GM10248 (cell line): ENCODE measurements at regions of chr22 and their contacts with region 1.

Region 1: DNA sequence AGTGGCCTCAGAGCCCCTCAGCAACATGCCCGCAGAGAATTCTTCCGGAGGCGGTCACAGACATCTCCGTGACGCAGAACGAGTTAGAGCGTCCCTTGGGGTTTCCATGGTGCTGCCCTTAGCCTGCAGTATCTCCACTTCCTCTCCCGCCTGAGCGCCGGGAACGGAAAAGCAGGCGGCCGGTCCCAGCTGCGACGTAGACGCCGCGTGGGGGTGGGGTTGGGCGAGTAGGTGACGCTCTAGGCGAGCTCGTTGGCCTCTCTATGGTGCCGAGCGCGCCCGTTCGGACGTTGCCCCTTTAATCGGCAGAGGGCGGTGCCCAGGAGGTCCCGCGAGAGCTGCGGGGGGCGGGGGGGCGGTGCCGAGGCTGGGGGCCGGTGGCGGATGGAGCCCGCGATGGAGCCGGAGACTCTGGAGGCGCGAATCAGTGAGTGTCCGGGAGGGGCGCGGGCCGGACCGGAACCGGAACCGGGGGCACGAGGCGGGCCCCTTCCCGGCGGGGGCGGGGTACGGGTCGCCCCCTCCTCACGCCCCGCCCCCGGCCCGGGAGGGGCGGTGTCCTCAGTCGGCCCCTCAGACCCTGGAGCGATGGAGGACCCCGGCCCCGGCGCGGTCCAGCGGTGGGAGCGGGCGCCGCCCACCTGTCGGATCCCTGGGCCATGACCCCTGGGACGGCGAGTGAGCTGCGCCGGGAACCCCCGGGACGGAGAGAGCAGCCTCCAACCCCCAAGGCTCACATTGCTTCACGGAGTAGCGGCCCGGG is at the start of gene GGA1:
- DNase-seq: peak; percentile 97
- CTCF ChIP-seq: no peak

Region 2: GRCh38 chr22:37499027-37499707 is 109.5 kb before region 1 on chr22:
- CTCF ChIA-PET with region 1: no interaction called
- POLR2A ChIA-PET with region 1: no interaction called
- DNase-seq: no peak
- CTCF ChIP-seq: no peak

Region 3: DNA sequence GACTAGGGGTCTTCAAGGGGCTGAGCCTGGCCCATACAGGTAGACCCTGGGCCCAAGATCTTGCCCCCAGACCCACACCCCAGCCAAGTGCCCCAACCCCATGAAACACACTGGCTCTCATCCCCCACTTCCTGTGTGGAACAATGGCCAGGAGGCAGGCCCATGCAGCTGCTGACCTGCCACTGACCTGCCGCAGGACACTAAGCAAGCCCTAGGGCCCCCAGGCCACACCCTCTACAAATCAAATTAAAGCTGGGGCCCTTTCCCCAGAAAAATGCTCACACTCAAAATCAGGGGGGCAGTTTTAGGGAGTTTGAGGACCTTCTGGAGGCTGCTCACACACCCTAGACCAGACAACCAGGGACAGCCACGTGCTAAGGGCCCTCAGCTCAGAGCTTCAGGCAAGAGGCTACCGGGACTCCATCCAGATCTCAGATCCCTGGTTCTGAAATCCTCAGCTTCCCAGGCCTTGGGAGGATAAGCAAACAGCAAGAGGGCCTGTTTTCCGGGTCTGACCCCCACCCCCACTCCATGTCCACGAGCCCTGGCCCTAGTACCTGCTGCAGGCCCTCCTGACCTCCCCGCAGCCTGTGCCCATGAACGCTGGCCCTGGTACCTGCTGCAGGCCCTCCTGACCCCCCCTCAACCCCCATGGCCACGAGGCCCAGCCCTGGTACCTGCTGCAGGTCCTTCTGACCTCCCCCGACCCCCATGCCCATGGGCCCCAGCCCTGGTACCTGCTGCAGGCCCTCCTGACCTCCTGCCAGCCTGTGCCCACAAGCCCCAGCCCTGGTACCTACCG is 99.4 kb before region 1 on chr22:
- CTCF ChIA-PET with region 1: no interaction called
- POLR2A ChIA-PET with region 1: no interaction called
- DNase-seq: no peak
- CTCF ChIP-seq: no peak

Region 4: DNA sequence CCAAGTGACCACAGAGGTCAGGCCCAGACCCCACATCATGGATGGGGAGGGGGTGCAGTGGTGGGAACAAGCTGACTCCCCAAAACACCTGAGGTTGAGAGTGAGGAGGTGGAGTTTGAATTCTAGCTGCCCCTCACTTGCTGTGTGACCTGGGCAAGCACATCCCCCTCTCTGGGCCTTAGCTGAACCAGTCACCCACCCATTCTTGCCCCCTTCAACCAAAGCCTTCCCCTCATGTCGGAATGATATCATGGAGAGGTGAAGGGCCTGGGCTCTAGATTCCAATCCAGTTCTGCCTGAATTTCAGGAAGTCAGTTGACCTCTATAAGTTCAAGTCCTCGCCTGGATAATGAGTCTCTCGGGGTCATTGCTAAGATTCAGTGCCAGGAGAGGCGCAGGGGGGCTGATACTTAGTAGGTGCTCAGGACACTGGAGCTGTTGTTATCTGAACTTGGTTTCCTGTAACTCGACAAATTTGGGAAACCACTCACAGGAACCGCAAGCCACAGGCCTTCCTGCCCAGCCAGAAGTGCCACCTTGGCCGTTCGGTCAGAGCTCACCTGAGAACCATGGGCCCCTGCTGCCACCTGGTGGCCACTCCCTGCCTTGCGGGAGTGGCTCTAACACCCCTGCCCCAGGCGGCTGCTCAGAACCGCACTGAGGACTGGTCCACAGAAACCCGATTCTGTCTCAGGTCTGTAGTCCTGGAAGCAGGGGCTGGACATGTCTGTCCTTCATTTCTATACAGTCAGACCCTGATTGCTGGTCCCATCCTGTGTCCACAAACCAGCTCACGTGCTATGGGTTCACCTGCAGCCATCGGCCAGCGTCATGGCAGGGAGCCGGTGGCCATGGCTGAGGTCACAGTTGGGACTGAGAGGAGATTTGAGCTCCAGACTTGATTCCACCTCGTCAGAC is 41.5 kb before region 1 on chr22:
- CTCF ChIA-PET with region 1: interaction called, 49 read pairs
- POLR2A ChIA-PET with region 1: no interaction called
- DNase-seq: peak; percentile 92
- CTCF ChIP-seq: peak; percentile 97

Region 5: DNA sequence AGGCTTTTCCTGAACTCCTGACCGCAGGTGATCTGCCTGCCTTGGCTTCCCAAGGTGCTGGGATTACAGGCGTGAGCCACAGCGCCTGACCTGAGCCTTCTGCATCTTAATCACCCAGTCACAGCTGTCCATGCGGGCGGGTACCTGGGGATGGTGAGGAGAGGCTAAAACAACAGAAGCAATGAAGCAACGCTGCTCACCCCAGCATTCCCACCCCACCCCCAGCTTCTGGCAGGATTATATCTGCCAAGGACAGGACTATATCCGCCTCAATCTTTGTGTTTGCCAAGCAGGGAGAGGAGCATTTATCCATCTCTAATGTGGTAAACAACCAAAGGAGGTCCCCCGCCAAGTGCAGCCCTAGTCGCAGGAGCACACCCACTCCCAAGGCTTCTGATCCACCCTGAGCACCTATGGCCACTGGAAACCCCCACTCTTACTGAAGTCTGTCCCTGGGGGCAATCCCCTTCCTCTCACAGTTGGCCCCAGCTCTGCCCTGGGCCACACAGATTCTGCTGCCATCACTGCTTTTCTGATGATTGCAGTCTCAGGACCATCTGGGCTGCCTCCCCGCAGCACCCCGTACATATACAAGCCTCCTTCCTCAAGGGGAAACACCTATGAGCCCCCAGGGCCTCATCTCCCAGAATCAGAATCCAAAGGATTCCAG is 20.0 kb before region 1 on chr22:
- CTCF ChIA-PET with region 1: interaction called, 167 read pairs
- POLR2A ChIA-PET with region 1: interaction called, 4 read pairs
- DNase-seq: no peak
- CTCF ChIP-seq: no peak

Region 6: DNA sequence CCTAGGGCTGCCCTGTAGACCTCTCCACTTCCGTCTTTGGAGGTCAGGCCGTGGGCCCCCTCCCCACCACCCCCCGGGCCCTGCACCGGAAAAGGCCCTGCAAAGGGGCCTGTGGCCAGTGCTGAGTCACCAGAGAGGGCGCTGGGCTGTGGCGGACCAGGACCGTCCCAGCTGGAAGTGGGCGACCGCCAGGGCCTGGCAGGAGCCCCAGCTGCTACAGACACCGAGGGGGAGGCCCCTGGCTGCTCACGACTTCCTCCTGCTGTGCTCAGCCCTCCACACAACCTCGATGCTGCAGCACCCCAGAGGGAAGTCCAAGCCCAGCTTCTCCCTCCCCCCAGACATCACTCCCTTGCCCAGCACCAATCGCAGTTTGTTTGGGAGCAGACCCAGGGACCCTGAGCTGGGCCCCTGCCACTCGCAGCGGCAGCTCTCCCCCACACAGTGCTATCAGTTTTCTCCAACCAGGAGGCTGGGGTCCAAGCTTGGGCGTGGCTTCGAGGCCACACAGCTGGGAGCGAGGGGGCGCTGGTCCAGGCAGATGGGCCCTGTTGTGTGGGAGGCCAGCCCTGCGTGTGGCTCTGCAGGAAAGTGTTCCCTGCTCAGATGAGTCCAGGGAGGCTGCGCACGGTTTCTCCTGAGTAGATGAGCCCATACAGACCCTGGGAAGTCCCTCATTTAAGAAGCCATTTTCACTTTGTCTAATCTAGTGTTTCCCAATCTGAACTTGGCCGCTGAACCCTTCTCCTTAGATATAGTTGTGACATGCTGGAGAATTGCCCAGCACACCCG is 25.2 kb after region 1 on chr22:
- CTCF ChIA-PET with region 1: interaction called, 190 read pairs
- POLR2A ChIA-PET with region 1: interaction called, 6 read pairs
- DNase-seq: peak; percentile 92
- CTCF ChIP-seq: peak; percentile 44

Region 7: DNA sequence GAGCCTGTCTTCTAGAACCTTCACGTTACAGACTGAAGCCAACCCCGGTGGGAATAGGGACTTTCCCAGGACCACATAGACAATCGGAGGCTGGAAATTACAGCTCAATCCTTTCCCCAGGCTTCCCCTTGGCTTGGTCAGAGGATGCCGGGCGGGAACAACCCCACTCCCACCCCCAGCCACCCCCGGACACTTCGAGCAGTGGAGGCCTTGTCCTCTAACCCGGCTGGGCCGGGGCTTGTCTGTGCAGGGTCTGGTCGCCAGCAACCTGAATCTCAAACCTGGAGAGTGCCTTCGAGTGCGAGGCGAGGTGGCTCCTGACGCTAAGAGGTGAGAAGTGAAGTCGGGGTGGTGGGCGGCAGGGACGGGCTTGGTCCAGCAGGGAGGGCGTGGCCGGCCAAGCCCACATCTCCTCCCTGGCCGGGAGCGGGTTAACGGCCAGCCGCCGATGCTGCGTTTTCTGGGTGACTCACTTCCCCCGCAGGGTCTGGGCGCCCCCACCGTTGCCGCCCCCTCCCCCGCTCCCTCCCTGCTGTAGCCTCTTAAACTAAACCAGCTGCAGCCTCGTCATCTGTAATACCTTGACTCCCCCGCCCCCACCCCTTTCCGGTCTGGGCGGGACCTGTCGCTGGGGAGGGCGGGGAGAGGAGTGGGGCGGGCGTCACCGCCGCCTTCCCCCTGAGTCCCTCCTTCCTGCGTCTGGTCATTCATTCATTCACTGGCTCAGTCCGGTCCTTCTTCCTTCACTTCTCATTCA is 68.3 kb after region 1 on chr22:
- CTCF ChIA-PET with region 1: interaction called, 62 read pairs
- POLR2A ChIA-PET with region 1: interaction called, 10 read pairs
- DNase-seq: peak; percentile 89
- CTCF ChIP-seq: no peak

Region 8: GRCh38 chr22:37880668-37881440 is 272.2 kb after region 1 on chr22:
- CTCF ChIA-PET with region 1: no interaction called
- POLR2A ChIA-PET with region 1: no interaction called
- DNase-seq: no peak
- CTCF ChIP-seq: no peak